PC-3 (cell line): ENCODE measurements at regions of chr14 and their contacts with region 1.

Region 1: GRCh38 chr14:22900081-22900799 is 17.2 kb downstream of the REM2 start:
- DNase-seq: peak; percentile 80
- ATAC-seq: peak; percentile 70
- H3K4me3 ChIP-seq: no peak overlapping the region
- H3K27ac ChIP-seq: no peak overlapping the region
- H3K4me1 ChIP-seq: peaks cover 32% of the 10 kb centered on the region
- H3K27me3 ChIP-seq: no peaks in the 10 kb centered on the region
- CTCF ChIP-seq: peak; percentile 71

Region 2: GRCh38 chr14:22822571-22823098 is 77.6 kb before region 1 on chr14:
- CTCF ChIA-PET with region 1: interaction called, 8 read pairs
- POLR2A ChIA-PET with region 1: no interaction called
- intact Hi-C with region 1: loop called (anchors 1 kb)
- DNase-seq: peak; percentile 89
- ATAC-seq: peak; percentile 83
- H3K4me3 ChIP-seq: peak overlapping the region; percentile 62
- H3K27ac ChIP-seq: no peak overlapping the region
- H3K4me1 ChIP-seq: peaks cover 39% of the 10 kb centered on the region
- H3K27me3 ChIP-seq: no peaks in the 10 kb centered on the region
- CTCF ChIP-seq: peak; percentile 88